Aorta (tissue), 5 donors: ENCODE measurements at regions of chr2 and their contacts with region 1.

Region 1: DNA sequence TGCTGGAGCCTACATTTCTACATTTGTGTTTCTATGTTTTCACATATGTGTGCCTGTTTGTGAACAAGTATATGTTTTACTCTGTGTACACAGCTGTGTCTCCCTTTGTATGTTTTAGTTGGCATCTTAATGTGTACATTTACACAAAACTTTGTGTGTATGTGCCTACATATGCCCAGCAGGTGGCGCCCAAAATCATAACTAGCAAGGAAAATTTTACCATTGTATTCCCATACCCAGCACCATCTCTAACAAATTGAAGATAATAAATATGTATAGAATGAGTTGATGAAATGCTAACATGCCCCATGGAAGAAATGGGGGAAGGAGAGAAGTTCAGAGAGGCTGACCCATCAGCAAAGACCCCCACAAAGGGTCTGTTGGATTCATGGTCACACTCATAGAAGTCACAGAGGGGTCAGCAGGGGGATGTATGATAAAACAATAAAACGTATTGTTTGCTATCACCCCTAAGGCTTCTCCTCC is 48.1 kb downstream of the PKDCC start:
- DNase-seq: peak; percentile 81 to 90
- ATAC-seq: peak; percentile 70
- H3K4me3 ChIP-seq: no peak overlapping the region
- H3K27ac ChIP-seq: no peak overlapping the region
- H3K4me1 ChIP-seq: no peaks in the 10 kb centered on the region
- H3K27me3 ChIP-seq: no peaks in the 10 kb centered on the region

Region 2: GRCh38 chr2:41068740-41069139 is 1027.2 kb before region 1 on chr2:
- intact Hi-C with region 1: no loop called
- DNase-seq: no peak
- ATAC-seq: no peak
- H3K4me3 ChIP-seq: no peak overlapping the region
- H3K27ac ChIP-seq: no peak overlapping the region
- H3K4me1 ChIP-seq: no peaks in the 10 kb centered on the region
- H3K27me3 ChIP-seq: no peaks in the 10 kb centered on the region

Region 3: GRCh38 chr2:42183775-42184174 is 87.8 kb after region 1 on chr2:
- intact Hi-C with region 1: loop called in 1 of 2 experiments (anchors 5 kb)
- DNase-seq: no peak
- ATAC-seq: no peak
- H3K4me3 ChIP-seq: no peak overlapping the region
- H3K27ac ChIP-seq: no peak overlapping the region
- H3K4me1 ChIP-seq: peaks cover 2 to 4% of the 10 kb centered on the region in 2 donors
- H3K27me3 ChIP-seq: no peaks in the 10 kb centered on the region

Region 4: DNA sequence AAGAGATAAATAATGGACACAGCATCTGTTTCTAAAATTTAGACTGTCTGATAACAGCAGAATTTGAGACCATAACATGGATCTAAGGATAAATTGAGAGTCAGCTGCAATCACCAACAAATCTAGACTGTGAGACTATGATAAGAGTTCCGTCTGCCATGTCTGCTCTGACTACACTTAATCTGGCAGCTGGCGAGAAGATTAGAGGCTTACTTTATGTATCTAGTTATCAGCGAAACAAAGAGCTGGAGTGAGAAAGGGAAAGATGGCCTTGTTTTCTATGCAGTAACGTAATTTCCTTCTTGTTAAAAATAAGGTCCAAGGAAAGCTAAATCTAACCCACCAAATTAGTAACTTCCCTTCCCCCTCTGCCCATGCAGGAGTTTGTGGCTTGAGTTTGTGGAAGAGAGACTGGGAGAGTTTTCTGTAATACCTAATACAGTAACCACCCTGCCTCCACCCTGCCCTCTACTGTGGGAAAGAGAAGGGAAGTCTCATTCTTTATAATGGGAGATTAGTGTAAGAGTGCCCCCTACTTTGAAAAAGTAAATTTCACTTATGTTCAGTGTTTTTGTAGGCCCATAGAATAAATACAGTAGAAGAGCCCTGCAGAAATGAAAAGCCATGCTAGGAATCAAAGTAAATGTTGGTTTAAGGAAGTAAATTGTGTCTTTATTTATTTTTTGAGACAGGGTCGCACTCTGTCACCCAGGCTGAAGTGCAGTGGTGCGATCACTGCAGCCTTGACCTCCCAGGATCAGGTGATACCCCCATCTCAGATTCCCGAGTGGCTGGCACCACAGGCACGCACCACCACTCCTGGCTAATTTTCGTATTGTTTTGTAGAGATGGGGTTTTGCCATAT is 100.7 kb after region 1 on chr2:
- intact Hi-C with region 1: loop called in 1 of 2 experiments (anchors 5 kb)
- DNase-seq: peak in 1 of 2 donors; percentile 60
- ATAC-seq: peak; percentile 64
- H3K4me3 ChIP-seq: no peak overlapping the region
- H3K27ac ChIP-seq: no peak overlapping the region
- H3K4me1 ChIP-seq: peaks cover 2 to 3% of the 10 kb centered on the region in 2 donors
- H3K27me3 ChIP-seq: no peaks in the 10 kb centered on the region

Region 5: DNA sequence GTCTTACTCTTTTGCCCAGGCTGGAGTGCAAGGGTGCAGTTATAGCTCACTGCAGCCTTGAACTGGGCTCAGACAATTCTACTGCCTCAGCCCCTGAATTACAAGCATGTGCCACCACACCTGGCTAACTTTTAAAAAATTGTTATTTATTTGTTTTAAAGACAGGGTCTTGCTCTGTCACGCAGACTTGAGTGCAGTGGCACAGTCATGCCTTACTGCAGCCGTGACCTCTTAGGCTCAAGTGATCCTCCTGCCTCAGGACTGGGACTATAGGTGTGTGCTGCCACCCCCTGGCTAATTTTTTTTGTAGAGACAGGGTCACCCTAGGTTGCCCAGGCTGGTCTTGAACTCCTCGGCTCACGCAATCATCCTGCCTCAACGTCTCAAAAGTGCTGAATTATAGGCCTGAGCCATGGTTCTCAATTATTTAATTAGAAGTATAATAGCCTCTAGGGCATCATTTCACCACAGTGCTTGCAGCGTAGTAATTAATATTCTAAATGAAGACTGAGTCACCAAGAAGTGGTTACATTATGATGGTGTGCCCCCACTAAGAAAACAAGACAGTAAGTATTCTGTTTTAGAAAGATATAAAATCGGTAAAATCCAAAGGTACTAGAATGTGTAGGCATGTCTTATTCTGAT is 142.8 kb after region 1 on chr2:
- intact Hi-C with region 1: loop called (anchors 2 to 5 kb)
- DNase-seq: no peak
- ATAC-seq: no peak
- H3K4me3 ChIP-seq: no peak overlapping the region
- H3K27ac ChIP-seq: no peak overlapping the region
- H3K4me1 ChIP-seq: peaks cover 0 to 6% of the 10 kb centered on the region in 2 donors
- H3K27me3 ChIP-seq: no peaks in the 10 kb centered on the region

Region 6: DNA sequence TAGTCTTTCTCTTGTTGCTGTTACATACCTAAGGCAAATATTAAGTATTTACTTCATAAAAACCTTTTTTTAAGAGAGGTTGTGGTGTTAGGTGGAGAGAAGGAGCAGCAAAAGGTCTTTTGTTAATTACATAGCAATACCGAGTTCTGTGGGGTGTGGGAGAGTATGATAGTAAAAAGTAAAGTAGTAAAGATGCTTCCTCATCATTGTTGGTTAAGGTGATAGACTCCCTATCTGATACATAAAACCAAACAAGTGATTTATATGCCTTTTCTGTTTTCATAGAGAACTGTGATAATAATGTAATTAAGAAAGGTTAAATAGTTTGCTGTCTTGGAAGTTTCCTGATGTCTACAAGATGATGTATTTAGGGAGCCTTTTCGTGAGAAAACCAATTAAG is 148.6 kb after region 1 on chr2:
- intact Hi-C with region 1: loop called (anchors 2 to 5 kb)
- DNase-seq: no peak
- ATAC-seq: no peak
- H3K4me3 ChIP-seq: no peak overlapping the region
- H3K27ac ChIP-seq: no peak overlapping the region
- H3K4me1 ChIP-seq: peaks cover 0 to 6% of the 10 kb centered on the region in 2 donors
- H3K27me3 ChIP-seq: no peaks in the 10 kb centered on the region

Region 7: GRCh38 chr2:42328148-42328833 is 232.3 kb after region 1 on chr2:
- intact Hi-C with region 1: loop called (anchors 2 to 5 kb)
- DNase-seq: no peak
- ATAC-seq: no peak
- H3K4me3 ChIP-seq: no peak overlapping the region
- H3K27ac ChIP-seq: no peak overlapping the region
- H3K4me1 ChIP-seq: no peaks in the 10 kb centered on the region
- H3K27me3 ChIP-seq: no peaks in the 10 kb centered on the region

Region 8: GRCh38 chr2:42360890-42361727 is 265.1 kb after region 1 on chr2 and contains the start of gene COX7A2L:
- intact Hi-C with region 1: loop called in 1 of 2 experiments (anchors 2 kb)
- DNase-seq: peak; percentile 98 to 99
- ATAC-seq: peak; percentile 100
- H3K4me3 ChIP-seq: peak within 1 kb of the TSS; percentile 88 to 90
- H3K27ac ChIP-seq: peak within 1 kb of the TSS in 1 of 2 donors; percentile 93
- H3K4me1 ChIP-seq: peaks cover 0 to 2% of the 10 kb centered on the region in 2 donors
- H3K27me3 ChIP-seq: no peaks in the 10 kb centered on the region
- total RNA-seq, gene COX7A2L: 60.8 to 62.1 TPM